ENCODE measurements at regions of chr3 and their contacts with region 1.

Region 1: DNA sequence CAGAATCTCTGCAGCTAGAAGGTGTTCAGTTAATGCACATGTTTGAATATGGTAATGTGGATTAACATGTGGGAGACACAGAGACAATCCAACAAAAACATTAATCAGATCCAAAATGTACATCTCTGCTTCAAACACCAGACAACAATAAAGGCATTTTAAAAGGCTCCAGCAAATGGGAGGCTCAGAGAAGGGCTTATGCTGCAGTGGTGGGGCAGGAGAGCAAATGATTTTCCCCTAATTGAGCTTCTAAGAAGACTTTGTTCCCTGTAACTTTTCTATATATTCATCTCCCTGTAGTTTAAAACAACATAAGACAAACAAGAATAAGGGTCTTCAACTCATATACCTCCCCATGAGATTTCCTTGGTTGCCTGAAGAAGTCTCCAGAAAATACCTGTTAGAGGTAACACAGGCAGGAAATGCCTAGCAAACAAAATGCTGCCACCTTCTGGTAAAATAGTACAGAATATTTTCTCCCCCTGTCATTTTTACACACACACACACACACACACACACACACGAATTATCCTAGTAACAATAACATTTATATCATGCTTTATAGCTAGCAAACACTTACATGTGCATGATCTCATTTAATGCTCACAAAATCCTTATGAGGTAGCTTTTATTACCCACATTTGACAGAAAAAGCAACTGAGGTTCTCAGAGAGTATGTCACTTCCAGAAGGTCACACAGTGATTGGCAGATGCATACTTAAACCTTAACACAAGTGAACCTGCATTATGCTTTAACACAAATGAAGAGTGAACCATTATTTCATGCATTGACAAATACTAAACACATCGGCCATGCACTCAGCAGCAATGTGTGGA is 123.4 kb upstream of the MB21D2 start:
- DNase-seq: peak; percentile 5
- ATAC-seq: peak; percentile 83
- H3K4me3 ChIP-seq: no peak overlapping the region
- H3K27ac ChIP-seq: no peak overlapping the region
- H3K4me1 ChIP-seq: no peaks in the 10 kb centered on the region
- H3K27me3 ChIP-seq: no peaks in the 10 kb centered on the region
- CTCF ChIP-seq: peak; percentile 22 to 56 (median 38); a peak in 5 of 6 replicates
- EP300 ChIP-seq: no peak
- POLR2A ChIP-seq: no peak
- RAD21 ChIP-seq: peak; percentile 84

Region 2: GRCh38 chr3:192802957-192803899 is 237.8 kb before region 1 on chr3:
- CTCF ChIA-PET with region 1: interaction called, 401 read pairs
- POLR2A ChIA-PET with region 1: no interaction called
- RAD21 ChIA-PET with region 1: interaction called, 12 read pairs
- SMC1A ChIA-PET with region 1: interaction called, 309 read pairs
- in situ Hi-C with region 1: no loop called
- intact Hi-C with region 1: no loop called
- DNase-seq: no peak
- ATAC-seq: peak; percentile 87
- H3K4me3 ChIP-seq: no peak overlapping the region
- H3K27ac ChIP-seq: no peak overlapping the region
- H3K4me1 ChIP-seq: no peaks in the 10 kb centered on the region
- H3K27me3 ChIP-seq: no peaks in the 10 kb centered on the region
- CTCF ChIP-seq: peak; percentile 47 to 50 (median 47)
- EP300 ChIP-seq: no peak
- POLR2A ChIP-seq: no peak
- RAD21 ChIP-seq: peak; percentile 34; the same call in 1 of the 2 replicates

Region 3: GRCh38 chr3:192929755-192930547 is 111.1 kb before region 1 on chr3:
- CTCF ChIA-PET with region 1: interaction called, 11 read pairs
- POLR2A ChIA-PET with region 1: no interaction called
- RAD21 ChIA-PET with region 1: interaction called, 3 read pairs
- SMC1A ChIA-PET with region 1: interaction called, 6 read pairs
- in situ Hi-C with region 1: no loop called
- intact Hi-C with region 1: loop called (anchors 5 kb)
- DNase-seq: no peak
- ATAC-seq: no peak; the same call in 2 of the 3 replicates
- H3K4me3 ChIP-seq: no peak overlapping the region
- H3K27ac ChIP-seq: no peak overlapping the region
- H3K4me1 ChIP-seq: no peaks in the 10 kb centered on the region
- H3K27me3 ChIP-seq: no peaks in the 10 kb centered on the region
- CTCF ChIP-seq: no peak
- EP300 ChIP-seq: no peak
- POLR2A ChIP-seq: no peak
- RAD21 ChIP-seq: no peak

Region 4: GRCh38 chr3:193030276-193030675 is 10.8 kb before region 1 on chr3:
- CTCF ChIA-PET with region 1: interaction called, 15 read pairs
- POLR2A ChIA-PET with region 1: interaction called, 3 read pairs
- RAD21 ChIA-PET with region 1: interaction called, 3 read pairs
- SMC1A ChIA-PET with region 1: interaction called, 6 read pairs
- in situ Hi-C with region 1: no loop called
- intact Hi-C with region 1: no loop called
- DNase-seq: no peak
- ATAC-seq: no peak
- H3K4me3 ChIP-seq: no peak overlapping the region
- H3K27ac ChIP-seq: no peak overlapping the region
- H3K4me1 ChIP-seq: no peaks in the 10 kb centered on the region
- H3K27me3 ChIP-seq: no peaks in the 10 kb centered on the region
- CTCF ChIP-seq: no peak
- EP300 ChIP-seq: no peak
- POLR2A ChIP-seq: no peak
- RAD21 ChIP-seq: no peak

Region 5: DNA sequence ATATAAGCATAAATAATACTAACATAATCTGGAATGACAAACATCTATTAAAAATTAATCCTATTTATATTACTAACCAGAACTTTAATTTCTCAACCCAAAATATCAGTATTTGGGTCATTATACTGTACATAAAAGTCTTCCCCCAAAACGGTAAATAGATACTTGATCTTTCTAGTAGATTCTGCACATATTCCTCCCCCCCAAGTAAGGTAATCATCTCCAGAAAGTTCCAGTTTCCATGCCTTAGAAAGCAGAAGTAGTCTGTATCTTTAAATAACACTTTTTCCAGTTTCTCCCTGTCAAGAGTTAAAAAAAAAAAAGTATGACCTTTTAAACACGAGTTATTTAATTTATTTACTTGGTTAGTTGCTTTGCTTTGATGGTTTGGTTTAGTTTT is 27.3 kb after region 1 on chr3:
- CTCF ChIA-PET with region 1: no interaction called
- POLR2A ChIA-PET with region 1: no interaction called
- RAD21 ChIA-PET with region 1: no interaction called
- SMC1A ChIA-PET with region 1: no interaction called
- in situ Hi-C with region 1: no loop called
- intact Hi-C with region 1: no loop called
- DNase-seq: no peak
- ATAC-seq: no peak
- H3K4me3 ChIP-seq: no peak overlapping the region
- H3K27ac ChIP-seq: no peak overlapping the region
- H3K4me1 ChIP-seq: no peaks in the 10 kb centered on the region
- H3K27me3 ChIP-seq: no peaks in the 10 kb centered on the region
- CTCF ChIP-seq: no peak
- EP300 ChIP-seq: no peak
- POLR2A ChIP-seq: no peak
- RAD21 ChIP-seq: no peak

Region 6: DNA sequence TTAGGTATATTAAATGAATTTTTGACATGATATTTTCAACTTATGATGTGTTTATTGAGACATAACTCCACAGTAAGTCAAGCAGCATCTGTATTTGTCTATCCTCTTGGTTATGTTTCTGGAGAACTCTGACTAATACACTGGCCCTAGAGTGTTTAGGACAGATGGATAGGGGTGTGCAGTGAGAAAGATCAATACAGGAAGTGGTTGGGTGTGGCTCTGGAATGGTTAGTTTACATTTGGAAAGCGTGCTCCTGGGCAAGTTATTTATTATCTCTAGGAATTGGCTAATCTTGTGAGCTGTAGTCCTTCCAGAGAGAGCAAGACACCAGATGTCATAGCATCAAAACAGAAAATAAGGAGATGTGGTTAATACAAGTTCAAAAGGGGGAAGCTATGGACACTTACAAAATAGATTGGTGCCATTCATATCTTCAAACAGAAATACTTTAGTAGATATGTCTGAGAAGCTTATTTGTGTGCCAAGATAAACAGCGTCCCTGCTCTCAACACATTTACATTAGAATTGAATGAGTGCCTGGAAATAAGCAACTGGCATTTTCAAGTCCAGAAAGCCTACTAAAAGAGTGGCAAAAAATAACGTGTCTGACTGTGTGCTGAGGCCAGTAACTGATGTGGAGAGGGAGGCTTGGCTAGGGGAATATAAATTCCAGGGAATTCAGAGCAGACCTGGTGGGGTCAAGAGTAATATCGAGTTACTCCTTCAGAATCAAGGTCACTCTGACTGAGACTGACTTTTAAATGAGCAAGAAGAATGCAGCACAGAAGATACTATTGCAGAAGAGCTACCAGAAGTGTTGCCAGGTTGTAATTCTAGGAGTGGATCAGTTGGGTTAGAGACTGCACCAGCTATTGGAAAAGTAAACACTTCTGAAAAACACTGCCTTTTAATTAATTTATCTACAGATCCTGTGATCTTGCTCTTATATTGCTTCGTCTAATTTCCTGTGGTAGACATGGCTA is 166.5 kb after region 1 on chr3:
- CTCF ChIA-PET with region 1: no interaction called
- POLR2A ChIA-PET with region 1: no interaction called
- RAD21 ChIA-PET with region 1: no interaction called
- SMC1A ChIA-PET with region 1: no interaction called
- in situ Hi-C with region 1: no loop called
- intact Hi-C with region 1: no loop called
- DNase-seq: no peak
- ATAC-seq: no peak
- H3K4me3 ChIP-seq: no peak overlapping the region
- H3K27ac ChIP-seq: no peak overlapping the region
- H3K4me1 ChIP-seq: no peaks in the 10 kb centered on the region
- H3K27me3 ChIP-seq: no peaks in the 10 kb centered on the region
- CTCF ChIP-seq: no peak
- EP300 ChIP-seq: no peak
- POLR2A ChIP-seq: no peak
- RAD21 ChIP-seq: no peak

Region 7: GRCh38 chr3:193572426-193572908 is 531.4 kb after region 1 on chr3:
- CTCF ChIA-PET with region 1: no interaction called
- POLR2A ChIA-PET with region 1: no interaction called
- RAD21 ChIA-PET with region 1: no interaction called
- SMC1A ChIA-PET with region 1: no interaction called
- in situ Hi-C with region 1: loop called (anchors 10 kb)
- intact Hi-C with region 1: loop called (anchors 5 kb)
- DNase-seq: no peak
- ATAC-seq: peak; percentile 91
- H3K4me3 ChIP-seq: no peak overlapping the region
- H3K27ac ChIP-seq: no peak overlapping the region
- H3K4me1 ChIP-seq: no peaks in the 10 kb centered on the region
- H3K27me3 ChIP-seq: no peaks in the 10 kb centered on the region
- CTCF ChIP-seq: peak; percentile 64 to 88 (median 79)
- EP300 ChIP-seq: no peak
- POLR2A ChIP-seq: no peak
- RAD21 ChIP-seq: peak; percentile 91

Measured in GM12878 (cell line).